Panc1 (cell line): ENCODE measurements at regions of chr6 and their contacts with region 1.

Region 1: DNA sequence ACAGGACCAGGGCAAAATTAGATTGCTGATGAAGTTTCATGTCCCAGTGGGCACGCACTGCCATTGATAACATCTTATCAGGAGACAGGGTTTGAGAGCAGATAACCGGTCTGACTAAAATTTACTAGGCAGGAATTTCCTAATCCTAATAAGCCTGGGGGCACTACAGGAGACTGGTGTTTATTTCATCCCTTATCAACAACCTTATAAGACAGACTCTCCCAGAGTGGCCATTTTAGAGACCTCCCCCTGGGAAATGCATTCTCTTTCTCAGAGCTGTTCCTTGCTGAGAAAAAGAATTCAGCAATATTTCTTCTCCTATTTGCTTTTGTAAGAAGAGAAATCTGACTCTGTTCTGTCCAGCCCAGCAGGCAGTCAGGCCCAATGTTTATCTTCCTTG is 423.4 kb upstream of the IMPG1 start:
- DNase-seq: no peak
- ATAC-seq: no peak
- H3K4me3 ChIP-seq: no peak overlapping the region
- H3K27ac ChIP-seq: no peak overlapping the region
- H3K4me1 ChIP-seq: no peaks in the 10 kb centered on the region
- H3K27me3 ChIP-seq: no peaks in the 10 kb centered on the region
- CTCF ChIP-seq: no peak

Region 2: GRCh38 chr6:76014633-76015520 is 481.0 kb before region 1 on chr6:
- CTCF ChIA-PET with region 1: no interaction called
- POLR2A ChIA-PET with region 1: no interaction called
- in situ Hi-C with region 1: no loop called
- intact Hi-C with region 1: no loop called
- DNase-seq: no peak
- ATAC-seq: no peak
- H3K4me3 ChIP-seq: no peak overlapping the region
- H3K27ac ChIP-seq: no peak overlapping the region
- H3K4me1 ChIP-seq: no peaks in the 10 kb centered on the region
- H3K27me3 ChIP-seq: no peaks in the 10 kb centered on the region
- CTCF ChIP-seq: no peak

Region 3: DNA sequence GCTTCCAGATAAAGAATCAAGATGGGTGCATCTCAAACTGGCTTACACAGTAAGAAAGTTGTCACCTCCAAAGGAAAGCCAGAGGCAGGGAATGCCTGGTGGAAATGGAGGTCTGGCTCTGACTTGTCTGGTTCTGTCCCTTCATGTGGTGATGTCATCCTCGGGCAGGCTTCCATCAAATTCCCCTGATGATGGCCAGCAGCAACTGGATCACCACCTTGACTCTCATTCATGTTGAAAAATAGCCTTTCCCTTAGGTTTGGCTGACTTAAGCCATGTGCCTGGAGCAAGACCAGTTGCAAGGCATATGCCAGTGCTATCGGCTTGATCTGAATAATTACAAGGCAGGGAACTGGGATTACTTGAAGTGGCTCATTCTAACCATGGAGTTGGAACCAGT is 452.2 kb before region 1 on chr6:
- CTCF ChIA-PET with region 1: no interaction called
- POLR2A ChIA-PET with region 1: interaction called, 13 read pairs
- in situ Hi-C with region 1: no loop called
- intact Hi-C with region 1: no loop called
- DNase-seq: no peak
- ATAC-seq: no peak
- H3K4me3 ChIP-seq: no peak overlapping the region
- H3K27ac ChIP-seq: no peak overlapping the region
- H3K4me1 ChIP-seq: no peaks in the 10 kb centered on the region
- H3K27me3 ChIP-seq: no peaks in the 10 kb centered on the region
- CTCF ChIP-seq: no peak

Region 4: GRCh38 chr6:76435174-76435573 is 60.7 kb before region 1 on chr6:
- CTCF ChIA-PET with region 1: no interaction called
- POLR2A ChIA-PET with region 1: no interaction called
- in situ Hi-C with region 1: no loop called
- intact Hi-C with region 1: no loop called
- DNase-seq: no peak
- ATAC-seq: no peak
- H3K4me3 ChIP-seq: no peak overlapping the region
- H3K27ac ChIP-seq: no peak overlapping the region
- H3K4me1 ChIP-seq: no peaks in the 10 kb centered on the region
- H3K27me3 ChIP-seq: no peaks in the 10 kb centered on the region
- CTCF ChIP-seq: no peak